ENCODE measurements at regions of chr12 and their contacts with region 1.

Region 1: GRCh38 chr12:3299929-3300832 is 190.8 kb upstream of the PRMT8 start:
- DNase-seq: peak; percentile 96
- H3K4me3 Mint-ChIP-seq: peak overlapping the region; percentile 71
- H3K27ac Mint-ChIP-seq: peak overlapping the region; percentile 98
- H3K4me1 Mint-ChIP-seq: peaks cover 34% of the 10 kb centered on the region
- H3K27me3 Mint-ChIP-seq: no peaks in the 10 kb centered on the region
- CTCF ChIP-seq: peak; percentile 98

Region 2: DNA sequence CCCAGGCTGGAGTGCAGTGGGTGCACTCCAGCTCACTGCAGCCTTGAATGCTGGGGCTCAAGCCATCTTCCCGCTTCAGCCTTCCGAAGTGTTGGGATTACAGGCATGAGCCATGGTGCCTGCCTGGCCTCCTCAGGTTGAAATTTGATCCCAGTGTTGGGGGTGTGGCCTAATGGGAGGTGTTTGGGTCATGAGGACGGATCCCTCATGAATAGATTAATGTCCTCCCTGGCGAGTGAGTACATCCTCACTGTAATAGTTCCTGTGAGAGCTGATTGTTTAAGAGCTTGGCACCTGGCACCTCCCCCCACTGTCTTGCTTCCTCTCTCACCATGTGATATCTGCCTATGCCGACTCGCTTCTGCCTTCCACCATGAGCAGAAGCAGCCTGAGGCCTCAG is 138.3 kb before region 1 on chr12:
- CTCF ChIA-PET with region 1: no interaction called
- POLR2A ChIA-PET with region 1: no interaction called
- intact Hi-C with region 1: no loop called
- DNase-seq: peak; percentile 28
- H3K4me3 Mint-ChIP-seq: no peak overlapping the region
- H3K27ac Mint-ChIP-seq: no peak overlapping the region
- H3K4me1 Mint-ChIP-seq: peaks cover 12% of the 10 kb centered on the region
- H3K27me3 Mint-ChIP-seq: no peaks in the 10 kb centered on the region
- CTCF ChIP-seq: no peak

Region 3: GRCh38 chr12:3275171-3276041 is 24.8 kb before region 1 on chr12:
- CTCF ChIA-PET with region 1: interaction called, 32 read pairs
- POLR2A ChIA-PET with region 1: interaction called, 3 read pairs
- intact Hi-C with region 1: no loop called
- DNase-seq: peak; percentile 68
- H3K4me3 Mint-ChIP-seq: no peak overlapping the region
- H3K27ac Mint-ChIP-seq: no peak overlapping the region
- H3K4me1 Mint-ChIP-seq: peaks cover 17% of the 10 kb centered on the region
- H3K27me3 Mint-ChIP-seq: no peaks in the 10 kb centered on the region
- CTCF ChIP-seq: peak; percentile 95

Region 4: DNA sequence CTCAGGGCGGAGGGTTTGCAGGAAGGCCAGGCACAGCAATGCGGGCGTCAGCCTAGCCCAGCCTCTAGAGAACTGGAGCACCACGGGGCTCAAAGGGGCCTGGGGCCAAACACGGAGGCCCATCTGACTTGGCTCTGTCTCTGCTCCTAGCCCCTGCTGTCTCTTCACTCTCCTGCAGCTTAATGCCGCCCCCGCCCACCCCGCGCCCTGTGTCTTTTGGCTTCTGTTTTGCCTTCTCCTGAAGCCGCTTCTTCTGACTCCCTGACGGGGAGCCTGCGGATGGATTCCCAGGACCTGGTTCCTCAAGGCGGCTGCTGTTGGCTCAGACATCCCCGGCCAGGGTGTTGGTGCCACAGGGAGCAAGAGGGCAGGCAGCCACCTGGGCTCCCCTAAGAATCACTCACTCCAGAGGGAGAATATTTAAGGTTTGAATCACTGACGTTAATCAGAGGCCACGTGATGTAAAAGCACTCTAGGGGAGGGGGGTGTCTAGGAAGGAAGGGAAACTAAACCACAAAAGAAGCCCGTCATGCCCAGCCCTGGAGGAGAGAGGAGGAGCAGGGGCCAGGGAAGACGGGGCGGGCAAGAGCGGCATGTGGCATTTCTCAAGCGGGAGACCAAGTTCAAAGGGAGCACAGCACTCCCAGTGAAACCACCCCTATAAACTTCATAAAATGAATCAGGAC is 154.0 kb after region 1 on chr12:
- CTCF ChIA-PET with region 1: interaction called, 28 read pairs
- POLR2A ChIA-PET with region 1: interaction called, 10 read pairs
- intact Hi-C with region 1: loop called (anchors 1 kb)
- DNase-seq: peak; percentile 98
- H3K4me3 Mint-ChIP-seq: peak overlapping the region; percentile 67
- H3K27ac Mint-ChIP-seq: peak overlapping the region; percentile 89
- H3K4me1 Mint-ChIP-seq: peaks cover 33% of the 10 kb centered on the region
- H3K27me3 Mint-ChIP-seq: no peaks in the 10 kb centered on the region
- CTCF ChIP-seq: no peak

Region 5: GRCh38 chr12:3527181-3527580 is 227.0 kb after region 1 on chr12:
- CTCF ChIA-PET with region 1: interaction called, 111 read pairs
- POLR2A ChIA-PET with region 1: interaction called, 24 read pairs
- intact Hi-C with region 1: loop called (anchors 1 kb)
- DNase-seq: peak; percentile 83
- H3K4me3 Mint-ChIP-seq: no peak overlapping the region
- H3K27ac Mint-ChIP-seq: peak overlapping the region; percentile 46
- H3K4me1 Mint-ChIP-seq: no peaks in the 10 kb centered on the region
- H3K27me3 Mint-ChIP-seq: no peaks in the 10 kb centered on the region
- CTCF ChIP-seq: no peak

Region 6: GRCh38 chr12:3680896-3681594 is 380.9 kb after region 1 on chr12:
- CTCF ChIA-PET with region 1: interaction called, 85 read pairs
- POLR2A ChIA-PET with region 1: interaction called, 5 read pairs
- intact Hi-C with region 1: loop called (anchors 1 kb)
- DNase-seq: peak; percentile 30
- H3K4me3 Mint-ChIP-seq: no peak overlapping the region
- H3K27ac Mint-ChIP-seq: no peak overlapping the region
- H3K4me1 Mint-ChIP-seq: peaks cover 6% of the 10 kb centered on the region
- H3K27me3 Mint-ChIP-seq: no peaks in the 10 kb centered on the region
- CTCF ChIP-seq: no peak

Region 7: GRCh38 chr12:3803865-3804472 is 503.8 kb after region 1 on chr12:
- CTCF ChIA-PET with region 1: interaction called, 131 read pairs
- POLR2A ChIA-PET with region 1: interaction called, 10 read pairs
- intact Hi-C with region 1: loop called (anchors 1 kb)
- DNase-seq: peak; percentile 68
- H3K4me3 Mint-ChIP-seq: no peak overlapping the region
- H3K27ac Mint-ChIP-seq: no peak overlapping the region
- H3K4me1 Mint-ChIP-seq: no peaks in the 10 kb centered on the region
- H3K27me3 Mint-ChIP-seq: no peaks in the 10 kb centered on the region
- CTCF ChIP-seq: peak; percentile 71

Region 8: DNA sequence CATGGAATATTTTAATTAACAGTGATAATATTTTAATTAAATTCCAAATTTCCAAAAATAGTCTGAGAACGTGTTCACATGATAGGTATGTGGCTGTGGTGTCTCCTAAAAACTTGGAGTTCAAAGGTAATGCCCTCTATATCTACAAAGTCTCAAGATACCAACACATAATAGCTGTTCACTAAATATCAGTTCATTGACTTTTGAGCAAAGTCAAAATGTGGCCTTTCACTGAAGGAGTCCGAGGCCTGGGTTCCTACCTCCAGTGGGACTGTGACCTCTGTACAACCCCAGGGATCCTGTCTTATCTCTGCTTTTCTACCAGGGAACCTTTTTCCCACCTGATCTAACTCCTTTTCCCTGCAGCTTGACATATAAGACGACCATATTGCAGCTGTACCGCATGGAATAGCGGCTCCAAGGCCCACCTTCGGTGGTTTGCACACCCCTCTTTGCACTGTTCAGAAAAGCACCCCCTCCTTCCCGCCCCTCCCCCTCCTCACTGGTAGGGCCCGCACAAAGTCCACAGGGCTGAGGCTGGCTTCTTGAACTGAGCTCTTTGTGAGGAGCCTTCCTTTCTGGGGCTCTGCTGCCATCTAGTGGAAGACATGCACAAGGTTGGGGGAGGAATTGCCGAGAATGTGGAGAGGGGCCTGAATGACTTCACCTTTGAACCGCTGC is 976.5 kb after region 1 on chr12:
- CTCF ChIA-PET with region 1: interaction called, 25 read pairs
- POLR2A ChIA-PET with region 1: interaction called, 3 read pairs
- intact Hi-C with region 1: loop called (anchors 2 kb)
- DNase-seq: peak; percentile 91
- H3K4me3 Mint-ChIP-seq: peak overlapping the region; percentile 79
- H3K27ac Mint-ChIP-seq: no peak overlapping the region
- H3K4me1 Mint-ChIP-seq: peaks cover 19% of the 10 kb centered on the region
- H3K27me3 Mint-ChIP-seq: peaks cover 41% of the 10 kb centered on the region
- CTCF ChIP-seq: peak; percentile 93